Activated CD4-positive, alpha-beta memory T cell treated with anti-CD3 and anti-CD28 coated beads, Interleukin-2, amount 10 ng/mL, durations not matched to agents 7 days and 5 days (primary cell): ENCODE measurements at regions of chr12 and their contacts with region 1.

Region 1: GRCh38 chr12:104456417-104456949 is at the start of gene CHST11:
- DNase-seq: peak; percentile 84
- H3K4me3 Mint-ChIP-seq: peak within 1 kb of the TSS; percentile 99
- H3K27ac Mint-ChIP-seq: peak within 1 kb of the TSS; percentile 94
- H3K4me1 Mint-ChIP-seq: peaks cover 29% of the 10 kb centered on the region
- H3K27me3 Mint-ChIP-seq: peaks cover 4% of the 10 kb centered on the region
- total RNA-seq, gene CHST11: 124 to 125 TPM

Region 2: DNA sequence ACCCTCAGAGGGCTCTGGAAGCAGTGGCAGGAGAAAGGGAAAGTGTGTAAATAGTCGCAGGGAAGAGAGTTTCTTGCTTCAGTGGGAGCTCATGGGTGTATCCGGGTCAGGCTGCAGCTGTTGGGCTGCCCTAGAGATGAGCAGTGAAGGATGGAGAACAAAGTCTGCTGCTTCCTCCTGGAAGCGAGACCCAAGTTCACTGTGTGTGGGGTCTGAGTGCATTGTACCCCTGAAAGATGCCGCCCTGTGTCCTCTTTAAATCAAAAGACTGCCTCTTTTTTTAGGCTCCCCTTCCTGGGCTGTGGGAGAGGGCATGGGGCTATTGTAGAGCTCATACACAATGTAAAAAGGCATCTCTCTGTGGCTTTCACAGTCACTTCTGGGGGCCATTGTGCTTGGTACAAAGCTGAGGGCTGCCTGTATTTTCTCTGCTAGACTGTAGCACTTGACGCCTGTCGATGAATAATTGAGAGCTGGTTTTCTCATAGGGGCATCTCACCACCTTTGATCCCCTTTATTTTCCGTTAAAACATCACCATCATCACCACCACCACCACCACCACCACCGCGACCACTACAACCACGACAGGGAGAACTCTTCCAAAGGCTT is 17.0 kb after region 1 on chr12:
- CTCF ChIA-PET with region 1: interaction called, 30 read pairs
- POLR2A ChIA-PET with region 1: interaction called, 106 read pairs
- DNase-seq: peak; percentile 33
- H3K4me3 Mint-ChIP-seq: peak overlapping the region; percentile 52
- H3K27ac Mint-ChIP-seq: peak overlapping the region; percentile 76
- H3K4me1 Mint-ChIP-seq: peaks cover 85% of the 10 kb centered on the region
- H3K27me3 Mint-ChIP-seq: no peaks in the 10 kb centered on the region

Region 3: GRCh38 chr12:104485651-104486362 is 29.3 kb after region 1 on chr12:
- CTCF ChIA-PET with region 1: interaction called, 3 read pairs
- POLR2A ChIA-PET with region 1: interaction called, 18 read pairs
- DNase-seq: peak; percentile 72
- H3K4me3 Mint-ChIP-seq: peak overlapping the region; percentile 39
- H3K27ac Mint-ChIP-seq: peak overlapping the region; percentile 86
- H3K4me1 Mint-ChIP-seq: peaks cover 93% of the 10 kb centered on the region
- H3K27me3 Mint-ChIP-seq: no peaks in the 10 kb centered on the region

Region 4: DNA sequence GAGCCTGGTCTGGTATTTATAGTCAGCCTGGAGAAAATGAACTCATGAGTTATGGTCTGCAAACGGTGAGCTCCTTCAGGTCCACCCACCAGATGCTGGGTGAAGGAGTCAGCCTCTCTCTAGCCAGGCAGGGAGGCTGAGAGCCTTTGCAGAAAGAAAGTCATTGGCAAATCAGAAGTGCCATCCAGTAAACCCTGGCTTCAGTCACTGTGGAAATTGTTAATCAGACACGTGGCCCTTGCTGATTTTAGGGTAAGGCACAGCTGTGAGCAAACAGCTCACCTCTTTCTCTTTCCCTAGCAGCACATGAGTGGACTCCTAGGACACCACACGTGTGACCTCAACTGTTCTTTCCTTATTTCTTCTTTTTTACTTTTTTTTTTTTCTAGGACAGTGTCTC is 45.2 kb after region 1 on chr12:
- CTCF ChIA-PET with region 1: interaction called, 5 read pairs
- POLR2A ChIA-PET with region 1: interaction called, 19 read pairs
- DNase-seq: no peak
- H3K4me3 Mint-ChIP-seq: no peak overlapping the region
- H3K27ac Mint-ChIP-seq: no peak overlapping the region
- H3K4me1 Mint-ChIP-seq: peaks cover 92% of the 10 kb centered on the region
- H3K27me3 Mint-ChIP-seq: no peaks in the 10 kb centered on the region

Region 5: DNA sequence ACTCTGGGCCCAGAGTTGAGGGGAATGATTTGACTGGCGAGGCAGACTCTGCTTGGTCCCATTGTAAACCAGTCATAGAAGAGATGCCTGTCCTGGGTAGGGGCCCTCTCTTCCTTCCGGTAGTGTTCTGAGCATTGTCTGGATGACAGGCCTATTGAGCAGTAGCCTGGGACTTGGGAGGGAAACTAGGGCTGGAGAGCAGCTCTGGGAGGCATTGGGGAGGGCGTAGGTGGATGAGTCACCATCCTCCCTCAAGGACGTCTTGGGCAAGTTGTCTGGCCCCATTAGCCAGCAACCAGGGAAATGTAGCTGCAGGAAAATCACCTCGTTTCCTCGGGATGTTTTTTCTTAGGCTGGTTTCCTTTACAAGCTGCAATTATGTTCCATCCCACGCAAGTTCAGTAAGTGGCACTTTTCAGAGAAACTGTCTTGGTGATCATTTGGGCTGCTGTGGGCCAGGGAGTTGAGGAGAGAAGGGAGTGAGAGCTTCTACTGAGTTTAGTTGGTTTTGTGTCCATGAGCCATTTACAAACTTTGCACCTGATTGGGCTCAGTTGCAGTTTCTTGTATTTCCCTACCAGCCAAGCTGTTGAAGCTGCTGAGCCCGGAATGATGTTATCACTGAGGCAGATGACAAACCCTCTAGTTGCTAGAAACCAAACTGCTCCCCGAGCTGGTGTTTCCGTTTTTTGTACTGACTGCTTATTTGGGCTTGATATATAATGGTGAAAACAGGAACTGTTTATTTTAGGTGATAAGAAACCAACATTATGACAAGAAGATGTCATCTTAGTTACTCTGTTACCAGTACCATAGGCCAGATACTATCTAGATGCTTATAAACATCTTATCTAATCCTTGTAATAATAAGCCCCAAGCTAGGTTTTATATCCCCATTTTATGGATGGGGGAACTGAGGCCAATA is 147.8 kb after region 1 on chr12:
- CTCF ChIA-PET with region 1: interaction called, 10 read pairs
- POLR2A ChIA-PET with region 1: interaction called, 15 read pairs
- DNase-seq: peak; percentile 71
- H3K4me3 Mint-ChIP-seq: peak overlapping the region; percentile 34
- H3K27ac Mint-ChIP-seq: peak overlapping the region; percentile 95
- H3K4me1 Mint-ChIP-seq: peaks cover 69% of the 10 kb centered on the region
- H3K27me3 Mint-ChIP-seq: no peaks in the 10 kb centered on the region